ENCODE measurements at regions of chr19 and their contacts with region 1.

Region 1: GRCh38 chr19:3304871-3305423 is 61.4 kb upstream of the NFIC start:
- DNase-seq: peak; percentile 36 to 96 (median 80)

Region 2: DNA sequence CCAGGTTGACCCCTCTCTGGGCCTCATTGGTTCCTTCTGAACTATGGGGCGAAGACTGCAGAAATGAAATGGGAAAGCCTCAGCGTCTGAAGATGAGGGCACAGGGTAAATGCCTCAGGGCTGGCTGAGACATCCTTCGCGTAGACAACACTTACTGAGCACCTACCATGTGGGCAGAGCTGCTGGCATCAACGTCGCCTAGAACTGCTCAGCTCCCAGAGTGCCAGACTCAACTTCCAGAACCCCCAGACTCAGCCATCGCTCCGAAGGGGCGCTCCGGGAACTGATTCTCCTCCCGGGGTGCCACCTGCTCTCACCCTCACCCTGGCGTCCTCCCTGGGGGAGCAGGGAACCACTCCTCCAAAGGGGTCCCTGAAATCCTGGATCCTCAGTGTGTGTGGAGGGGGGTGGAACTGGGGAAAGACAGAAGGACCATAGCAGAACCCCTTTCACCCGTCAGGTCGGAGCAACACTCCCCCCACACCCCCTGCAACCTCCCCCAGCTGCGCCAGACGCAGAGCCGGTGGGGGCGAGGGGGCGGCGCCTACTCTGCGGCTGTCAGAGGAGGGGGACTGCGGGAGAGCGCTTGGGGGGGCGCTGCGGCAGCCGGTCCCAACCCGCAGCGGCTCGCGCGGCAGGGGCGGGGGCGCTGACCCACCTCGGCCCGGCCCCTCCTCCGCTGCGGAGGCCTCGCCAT is 53.2 kb after region 1 on chr19:
- intact Hi-C with region 1: no loop called
- DNase-seq: peak in 3 of 10 donors; percentile 46 to 88 (median 83)

Region 3: GRCh38 chr19:3710265-3710812 is 405.4 kb after region 1 on chr19:
- intact Hi-C with region 1: loop called (anchors 10 kb)
- DNase-seq: peak in 4 of 10 donors; percentile 15 to 90 (median 26)